Right ventricle myocardium superior (tissue), 1 donor: ENCODE measurements at regions of chr2 and their contacts with region 1.

Region 1: DNA sequence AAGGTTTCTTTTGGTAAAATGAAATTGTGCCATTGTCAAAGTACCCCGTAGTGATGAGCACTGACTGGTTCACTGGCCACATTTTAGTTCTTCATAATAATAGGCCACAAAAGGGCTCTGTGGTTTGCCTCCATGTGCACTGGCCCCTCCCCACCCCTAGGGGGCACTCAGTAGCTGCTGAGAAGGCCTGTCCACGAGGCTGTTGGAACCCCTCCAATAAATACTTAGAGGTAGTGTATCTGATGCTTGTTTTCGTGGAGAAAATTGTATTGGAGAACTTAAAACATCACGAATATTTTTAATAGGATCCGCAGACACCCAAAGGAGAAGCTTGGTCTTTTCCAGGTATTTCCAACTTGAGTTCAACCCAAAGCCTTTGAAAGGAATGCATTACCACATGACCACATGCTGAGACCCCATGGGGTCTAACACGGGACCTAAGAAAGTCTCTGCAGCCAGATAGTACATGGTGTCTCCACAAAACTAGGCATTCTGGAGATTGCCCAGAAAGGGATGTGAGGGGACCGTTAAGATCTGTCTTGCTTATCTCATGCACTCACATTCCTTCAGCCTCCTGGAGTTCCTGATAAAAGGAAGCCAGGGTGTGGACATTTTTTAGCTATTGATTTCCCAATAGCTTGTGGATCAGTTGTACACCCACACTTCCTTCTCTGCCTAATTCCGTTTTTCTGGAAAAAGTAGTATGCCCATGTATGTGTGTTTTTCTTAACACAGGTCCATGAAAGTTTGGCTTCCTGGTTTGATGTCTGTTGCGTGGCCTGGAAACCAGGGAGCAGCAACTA is 28.5 kb upstream of the NOSTRIN start:
- DNase-seq: peak; percentile 68
- ATAC-seq: peak; percentile 66

Region 2: DNA sequence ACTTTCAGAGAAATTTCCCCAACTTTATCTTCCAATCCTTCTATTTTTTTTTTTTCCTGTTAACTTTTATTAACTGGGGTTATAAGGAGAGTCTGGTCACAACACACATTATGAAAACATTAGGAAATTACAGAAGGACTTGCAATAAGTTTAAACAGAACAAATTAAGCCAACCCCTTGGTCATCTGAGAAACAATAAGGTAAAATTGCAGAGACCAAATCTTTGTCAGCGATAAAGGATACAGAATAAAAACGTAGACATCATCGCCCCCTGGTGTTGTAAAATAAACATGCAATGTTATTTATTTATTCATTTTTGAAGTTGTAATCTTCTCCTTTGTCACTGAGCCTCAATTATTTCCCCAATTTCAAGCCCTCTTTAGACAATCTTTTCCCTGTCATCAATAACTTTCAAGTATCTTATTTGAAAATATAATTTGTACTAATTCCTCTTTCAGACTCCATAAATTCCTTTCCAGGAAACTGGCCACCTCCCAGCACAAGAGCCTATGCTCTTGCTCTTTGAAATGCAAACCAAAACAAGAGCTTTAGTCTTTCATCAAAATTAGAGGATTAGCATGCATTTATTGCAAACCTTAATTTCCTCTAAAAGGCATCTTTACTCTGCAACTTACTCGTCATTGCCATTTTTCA is 146.7 kb after region 1 on chr2:
- intact Hi-C with region 1: loop called (anchors 5 kb)
- DNase-seq: no peak
- ATAC-seq: no peak

Region 3: DNA sequence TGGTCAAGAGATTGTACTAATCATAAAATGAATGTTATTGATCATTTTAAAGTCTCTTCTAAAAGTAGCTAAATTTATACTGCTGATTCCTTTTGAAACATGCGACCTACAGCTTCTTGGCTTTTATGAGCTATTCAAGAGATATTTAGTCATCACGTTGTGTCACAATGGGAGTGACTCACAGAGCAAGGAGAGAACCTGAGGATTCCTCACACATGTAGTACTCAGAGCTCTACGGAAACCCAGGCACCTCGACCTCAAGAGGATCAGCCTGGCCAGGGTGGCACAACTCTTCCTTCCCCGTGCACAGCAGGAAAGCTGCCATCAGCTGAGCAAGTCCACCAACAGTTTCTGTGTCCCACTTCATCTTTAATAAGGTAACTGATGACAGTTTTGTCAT is 295.4 kb after region 1 on chr2 and contains the start of gene DHRS9:
- intact Hi-C with region 1: no loop called
- DNase-seq: no peak
- ATAC-seq: no peak
- total RNA-seq, gene DHRS9: 1.3 TPM